WTC11 (cell line): ENCODE measurements at regions of chr18 and their contacts with region 1.

Region 1: DNA sequence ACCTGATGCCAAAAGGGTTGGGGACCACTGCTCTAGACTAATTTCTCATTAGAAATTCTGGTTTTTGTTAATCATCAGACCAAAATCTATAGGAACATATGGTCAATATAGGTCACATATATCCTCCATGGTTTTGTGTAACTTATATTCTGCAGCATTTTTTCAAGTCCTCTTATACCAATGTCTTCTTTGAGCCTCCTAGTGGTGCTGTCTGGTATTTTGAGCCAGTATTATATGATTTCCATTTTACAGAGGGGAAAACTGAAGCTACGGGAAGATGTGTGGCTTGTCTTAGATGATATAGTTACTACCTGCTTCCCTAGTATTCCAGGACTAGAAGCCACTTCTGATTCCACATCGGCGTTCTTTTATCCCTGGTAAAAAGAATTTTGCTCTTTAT is 13.8 kb downstream of the MAPK4 start:
- DNase-seq: no peak
- ATAC-seq: no peak; the same call in 1 of the 2 replicates
- H3K4me3 Mint-ChIP-seq: no peak overlapping the region
- H3K27ac Mint-ChIP-seq: no peak overlapping the region
- H3K4me1 Mint-ChIP-seq: peaks cover 29% of the 10 kb centered on the region
- H3K27me3 Mint-ChIP-seq: no peaks in the 10 kb centered on the region; the same call in 1 of the 2 replicates
- CTCF ChIP-seq: no peak

Region 2: GRCh38 chr18:50429207-50429948 is 144.3 kb before region 1 on chr18:
- CTCF ChIA-PET with region 1: no interaction called
- POLR2A ChIA-PET with region 1: no interaction called
- DNase-seq: no peak
- ATAC-seq: 0 out of 2 replicates have a peak, but pooled peaks have one; percentile 28
- H3K4me3 Mint-ChIP-seq: no peak overlapping the region
- H3K27ac Mint-ChIP-seq: no peak overlapping the region
- H3K4me1 Mint-ChIP-seq: no peaks in the 10 kb centered on the region
- H3K27me3 Mint-ChIP-seq: peaks cover 5% of the 10 kb centered on the region; the same call in 1 of the 2 replicates
- CTCF ChIP-seq: peak; percentile 18; the same call in 1 of the 2 replicates

Region 3: GRCh38 chr18:50559752-50560680 is 13.7 kb before region 1 on chr18 and contains the start of gene MAPK4:
- CTCF ChIA-PET with region 1: interaction called, 11 read pairs
- POLR2A ChIA-PET with region 1: no interaction called
- DNase-seq: peak; percentile 49
- ATAC-seq: peak; percentile 68
- H3K4me3 Mint-ChIP-seq: peak within 1 kb of the TSS; percentile 70
- H3K27ac Mint-ChIP-seq: no peak within 1 kb of the TSS
- H3K4me1 Mint-ChIP-seq: peaks cover 18% of the 10 kb centered on the region
- H3K27me3 Mint-ChIP-seq: peaks cover 83% of the 10 kb centered on the region
- CTCF ChIP-seq: no peak
- total RNA-seq, gene MAPK4: 3.0 to 4.2 TPM (median 3.3 TPM) in 3 replicates